T-cell (primary cell): ENCODE measurements at regions of chr20 and their contacts with region 1.

Region 1: GRCh38 chr20:38893565-38894090 is 32.6 kb upstream of the FAM83D start:
- DNase-seq: peak; percentile 54 to 90 (median 76)
- ATAC-seq: peak; percentile 83 to 89 (median 86)
- H3K4me3 ChIP-seq: peak overlapping the region in 1 of 2 donors; percentile 20
- H3K4me3 Mint-ChIP-seq: peak overlapping the region; percentile 10 to 61 (median 50)
- H3K27ac ChIP-seq: peak overlapping the region; percentile 84
- H3K27ac Mint-ChIP-seq: peak overlapping the region; percentile 96
- H3K4me1 ChIP-seq: peaks cover 4 to 30% of the 10 kb centered on the region in 2 experiments
- H3K4me1 Mint-ChIP-seq: peaks cover 26 to 42% (median 34%) of the 10 kb centered on the region in 3 donors
- H3K27me3 ChIP-seq: no peaks in the 10 kb centered on the region
- H3K27me3 Mint-ChIP-seq: no peaks in the 10 kb centered on the region

Region 2: DNA sequence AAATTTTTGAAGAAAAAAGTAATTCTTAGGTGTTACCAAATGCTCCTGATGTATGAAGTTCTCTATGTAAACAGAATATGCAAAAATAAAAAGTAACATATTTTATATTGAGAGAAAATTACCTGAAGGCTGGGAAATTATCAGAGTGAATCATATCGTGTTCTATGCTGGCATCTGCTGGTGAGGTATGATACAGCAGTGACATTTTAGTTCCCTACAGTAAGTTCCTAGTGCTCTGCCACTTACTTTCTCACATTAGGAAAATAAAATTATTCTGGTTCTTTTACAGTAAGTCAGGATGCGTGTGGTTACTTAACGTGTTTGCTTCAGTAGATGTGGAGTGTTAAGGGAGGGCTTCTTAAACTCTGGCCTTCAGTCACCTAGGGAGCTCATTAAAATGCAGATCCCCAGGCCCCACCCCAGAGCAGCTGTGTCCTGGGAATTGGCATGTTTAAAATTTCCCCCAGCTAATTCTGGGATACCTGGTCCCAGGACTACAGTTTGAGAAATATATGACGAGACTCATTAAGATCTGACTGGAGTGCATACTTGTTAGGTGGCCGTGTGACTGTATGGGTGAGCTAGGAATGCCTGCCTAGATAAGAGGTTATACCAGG is 142.2 kb before region 1 on chr20:
- CTCF ChIA-PET with region 1: interaction called, 4 to 12 read pairs
- POLR2A ChIA-PET with region 1: no interaction called
- DNase-seq: peak in 7 of 35 experiments; percentile 24 to 72 (median 32)
- ATAC-seq: no peak
- H3K4me3 ChIP-seq: no peak overlapping the region
- H3K4me3 Mint-ChIP-seq: no peak overlapping the region
- H3K27ac ChIP-seq: no peak overlapping the region
- H3K27ac Mint-ChIP-seq: no peak overlapping the region
- H3K4me1 ChIP-seq: peaks cover 9 to 16% of the 10 kb centered on the region in 2 experiments
- H3K4me1 Mint-ChIP-seq: peaks cover 26 to 32% (median 27%) of the 10 kb centered on the region in 3 donors
- H3K27me3 ChIP-seq: no peaks in the 10 kb centered on the region
- H3K27me3 Mint-ChIP-seq: no peaks in the 10 kb centered on the region

Region 3: GRCh38 chr20:38859070-38859690 is 34.4 kb before region 1 on chr20:
- CTCF ChIA-PET with region 1: interaction called in 1 of 2 experiments, 12 read pairs
- POLR2A ChIA-PET with region 1: interaction called in 1 of 2 experiments, 3 read pairs
- DNase-seq: peak in 11 of 35 experiments; percentile 22 to 65 (median 32)
- ATAC-seq: peak in 3 of 4 experiments; percentile 25 to 51 (median 49)
- H3K4me3 ChIP-seq: no peak overlapping the region
- H3K4me3 Mint-ChIP-seq: peak overlapping the region in 2 of 3 donors; percentile 21 to 34
- H3K27ac ChIP-seq: peak overlapping the region; percentile 75
- H3K27ac Mint-ChIP-seq: peak overlapping the region; percentile 87
- H3K4me1 ChIP-seq: peaks cover 7 to 76% of the 10 kb centered on the region in 2 experiments
- H3K4me1 Mint-ChIP-seq: peaks cover 87 to 91% (median 90%) of the 10 kb centered on the region in 3 donors
- H3K27me3 ChIP-seq: no peaks in the 10 kb centered on the region
- H3K27me3 Mint-ChIP-seq: no peaks in the 10 kb centered on the region

Region 4: GRCh38 chr20:38919683-38920082 is 26.1 kb after region 1 on chr20:
- CTCF ChIA-PET with region 1: no interaction called
- POLR2A ChIA-PET with region 1: no interaction called
- DNase-seq: no peak
- ATAC-seq: no peak
- H3K4me3 ChIP-seq: no peak overlapping the region
- H3K4me3 Mint-ChIP-seq: no peak overlapping the region
- H3K27ac ChIP-seq: no peak overlapping the region
- H3K27ac Mint-ChIP-seq: no peak overlapping the region
- H3K4me1 ChIP-seq: no peaks in the 10 kb centered on the region
- H3K4me1 Mint-ChIP-seq: no peaks in the 10 kb centered on the region
- H3K27me3 ChIP-seq: no peaks in the 10 kb centered on the region
- H3K27me3 Mint-ChIP-seq: no peaks in the 10 kb centered on the region